Panc1 (cell line): ENCODE measurements at regions of chr11 and their contacts with region 1.

Region 1: DNA sequence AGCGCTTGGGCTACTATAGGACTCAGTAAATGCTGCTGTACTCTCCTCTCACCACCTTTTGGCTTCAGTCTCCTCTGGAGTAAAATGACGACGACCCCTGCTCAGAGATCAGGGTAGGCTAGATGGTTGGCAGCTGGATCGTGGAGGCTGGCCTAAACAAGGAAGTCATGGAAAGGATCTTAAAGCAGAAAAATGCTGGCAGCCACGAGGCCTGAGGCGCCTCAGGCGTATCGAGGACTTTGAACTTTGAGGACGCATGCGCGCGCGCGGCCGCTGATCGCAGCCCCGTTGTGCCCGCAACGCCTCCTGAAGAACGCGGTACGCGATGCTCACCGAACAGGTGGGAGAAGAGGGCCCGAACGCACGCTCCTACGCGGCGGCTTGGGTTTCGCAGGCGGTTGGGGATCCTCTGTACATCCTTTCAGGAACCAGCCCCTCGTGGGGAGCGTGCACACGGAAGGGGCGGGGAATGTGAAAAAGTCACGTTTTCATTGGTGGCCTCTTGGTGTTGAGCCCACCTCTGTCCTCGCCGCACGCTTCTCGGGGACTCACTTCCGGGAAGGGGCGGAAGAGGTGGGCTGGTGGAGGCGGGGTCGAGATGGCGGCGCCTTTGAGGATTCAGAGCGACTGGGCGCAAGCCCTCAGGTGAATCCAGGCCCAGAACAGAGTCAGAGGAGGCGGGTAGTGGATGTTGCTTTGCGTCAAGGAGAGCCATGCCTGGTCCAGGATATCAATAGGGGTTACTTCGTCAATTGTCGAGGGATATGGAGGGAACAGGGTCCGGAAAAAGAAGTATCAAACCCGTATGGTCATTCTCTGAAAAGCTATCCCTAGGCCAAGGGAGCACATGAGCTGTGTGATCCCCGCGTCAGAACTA is at the starts of genes COA4 and PAAF1:
- DNase-seq: peak; percentile 91
- ATAC-seq: peak; percentile 99
- H3K4me3 ChIP-seq: peak within 1 kb of the TSS; percentile 84 to 88
- H3K27ac ChIP-seq: peak within 1 kb of the TSS; percentile 100
- H3K4me1 ChIP-seq: peaks cover 12% of the 10 kb centered on the region
- H3K27me3 ChIP-seq: no peaks in the 10 kb centered on the region
- CTCF ChIP-seq: no peak
- total RNA-seq, gene COA4: 155 TPM
- total RNA-seq, gene PAAF1: 22.1 TPM

Region 2: DNA sequence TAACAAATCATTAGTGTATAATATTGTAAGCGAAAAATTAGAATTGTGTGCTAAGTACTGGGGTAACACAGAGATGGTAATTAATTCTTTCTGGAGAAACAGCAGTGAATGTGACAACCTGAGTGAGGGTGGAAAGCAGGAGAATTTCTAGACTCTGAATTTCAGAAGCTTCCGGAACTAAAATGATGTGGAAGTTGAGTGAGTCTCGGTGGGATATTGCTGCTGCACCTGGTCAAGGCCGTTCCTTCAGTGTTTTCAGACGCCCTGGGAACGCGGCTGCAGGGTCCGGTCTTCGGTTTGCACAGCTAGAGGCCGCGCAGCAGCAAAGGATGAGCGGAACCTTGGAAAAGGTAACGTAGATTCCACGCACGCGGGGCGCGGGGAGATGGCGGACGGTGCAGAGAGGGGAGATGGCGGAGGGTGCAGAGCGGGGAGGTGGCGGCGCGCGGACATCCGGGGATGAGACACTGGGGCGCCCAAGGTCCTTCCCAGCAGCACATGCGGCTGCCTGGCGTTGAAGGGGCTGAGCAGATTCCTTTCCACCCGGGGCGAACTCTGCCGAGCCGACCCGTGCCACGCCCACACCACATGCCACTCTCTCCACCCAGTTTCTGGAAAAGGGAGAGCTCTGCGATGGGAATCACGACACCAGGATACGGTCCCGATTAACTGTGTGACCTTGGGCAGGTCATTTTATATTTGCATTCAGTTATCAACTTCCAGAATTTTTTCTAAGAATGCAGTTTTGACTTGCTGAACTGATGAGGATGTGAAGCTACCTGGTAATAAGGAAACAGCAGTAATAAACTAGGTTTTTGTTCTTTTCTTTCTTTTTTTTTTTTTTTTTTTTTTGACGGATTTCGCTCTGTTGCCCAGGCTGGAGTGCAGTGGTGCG is 88.8 kb before region 1 on chr11 and contains the start of gene MRPL48:
- CTCF ChIA-PET with region 1: no interaction called
- POLR2A ChIA-PET with region 1: interaction called, 11 read pairs
- in situ Hi-C with region 1: no loop called
- intact Hi-C with region 1: no loop called
- DNase-seq: peak; percentile 88
- ATAC-seq: peak; percentile 99
- H3K4me3 ChIP-seq: peak within 1 kb of the TSS; percentile 65 to 69
- H3K27ac ChIP-seq: peak within 1 kb of the TSS; percentile 99
- H3K4me1 ChIP-seq: peaks cover 12% of the 10 kb centered on the region
- H3K27me3 ChIP-seq: no peaks in the 10 kb centered on the region
- CTCF ChIP-seq: no peak
- total RNA-seq, gene MRPL48: 42.0 TPM

Region 3: GRCh38 chr11:73866586-73866996 is 10.1 kb before region 1 on chr11:
- CTCF ChIA-PET with region 1: no interaction called
- POLR2A ChIA-PET with region 1: no interaction called
- in situ Hi-C with region 1: no loop called
- intact Hi-C with region 1: no loop called
- DNase-seq: peak; percentile 80
- ATAC-seq: peak; percentile 32; the same call in 1 of the 2 replicates
- H3K4me3 ChIP-seq: no peak overlapping the region
- H3K27ac ChIP-seq: no peak overlapping the region
- H3K4me1 ChIP-seq: peaks cover 6% of the 10 kb centered on the region
- H3K27me3 ChIP-seq: no peaks in the 10 kb centered on the region
- CTCF ChIP-seq: no peak

Region 4: DNA sequence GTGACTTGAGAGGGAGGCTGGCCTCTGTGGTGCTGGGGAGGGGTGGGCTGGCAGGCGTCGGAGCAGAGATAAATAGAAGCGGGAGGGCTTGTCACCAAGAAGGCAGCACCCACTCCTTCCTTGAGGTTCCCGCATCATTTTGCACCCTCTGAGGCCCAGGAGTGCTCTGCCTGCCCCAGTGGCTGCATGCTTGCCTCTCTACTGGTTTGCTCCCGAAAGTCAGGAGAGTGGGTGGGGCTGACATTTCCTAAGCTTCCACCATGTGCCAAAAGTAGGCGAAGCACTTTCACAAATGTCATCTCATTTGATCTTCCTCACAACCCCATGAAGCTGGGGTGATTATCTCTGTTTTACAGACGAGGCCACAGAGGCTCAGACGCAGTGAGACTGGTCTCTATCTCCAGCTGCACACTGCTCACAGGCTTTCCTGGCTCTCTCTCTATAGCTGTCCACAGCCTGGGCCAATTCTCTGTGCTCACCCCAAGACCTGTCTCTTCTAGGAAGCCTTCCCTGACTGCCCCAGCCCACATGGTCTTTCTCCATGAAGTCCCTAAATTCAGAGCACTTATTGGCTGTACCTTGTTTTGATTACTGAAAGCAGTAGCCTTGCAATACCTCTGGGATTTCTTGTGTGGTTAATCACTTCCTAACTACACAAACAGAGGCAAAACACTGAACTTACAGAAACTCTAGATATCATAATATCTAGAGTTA is 134.9 kb after region 1 on chr11:
- CTCF ChIA-PET with region 1: no interaction called
- POLR2A ChIA-PET with region 1: no interaction called
- in situ Hi-C with region 1: no loop called
- intact Hi-C with region 1: no loop called
- DNase-seq: no peak
- ATAC-seq: no peak
- H3K4me3 ChIP-seq: no peak overlapping the region
- H3K27ac ChIP-seq: no peak overlapping the region
- H3K4me1 ChIP-seq: no peaks in the 10 kb centered on the region
- H3K27me3 ChIP-seq: no peaks in the 10 kb centered on the region
- CTCF ChIP-seq: no peak